Esophagus squamous epithelium (tissue), 5 donors: ENCODE measurements at regions of chr1 and their contacts with region 1.

Region 1: GRCh38 chr1:111709986-111710385 is 29.2 kb downstream of the INKA2 start:
- DNase-seq: no peak
- H3K4me3 ChIP-seq: no peak overlapping the region
- H3K27ac ChIP-seq: no peak overlapping the region
- H3K4me1 ChIP-seq: peaks cover 0 to 10% (median 0%) of the 10 kb centered on the region in 3 donors
- H3K27me3 ChIP-seq: no peaks in the 10 kb centered on the region
- CTCF ChIP-seq: no peak
- POLR2A ChIP-seq: no peak

Region 2: DNA sequence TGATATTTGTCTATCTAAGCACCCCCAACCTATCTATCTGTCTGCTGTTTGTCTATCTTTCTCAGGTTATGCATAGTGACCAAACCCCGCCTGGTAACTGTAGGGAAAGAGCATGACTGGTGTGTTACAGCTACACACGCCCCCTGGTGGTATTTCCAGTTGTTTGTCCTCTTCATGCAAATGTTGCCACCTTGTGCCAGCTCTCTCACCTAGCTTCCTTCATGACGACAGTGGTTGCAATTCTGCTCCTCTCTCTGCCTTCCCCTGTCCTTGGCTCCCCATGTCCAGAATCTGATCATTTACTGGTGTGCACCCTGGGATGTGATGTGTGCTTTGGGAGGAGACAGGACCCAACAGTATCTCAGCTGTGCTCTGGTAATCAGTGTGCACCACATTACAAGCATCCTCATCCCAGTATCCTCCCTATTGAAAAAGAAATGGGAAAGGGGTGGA is 37.3 kb after region 1 on chr1:
- intact Hi-C with region 1: loop called (anchors 5 kb)
- DNase-seq: no peak
- H3K4me3 ChIP-seq: no peak overlapping the region
- H3K27ac ChIP-seq: no peak overlapping the region
- H3K4me1 ChIP-seq: peaks cover 0 to 14% (median 0%) of the 10 kb centered on the region in 3 donors
- H3K27me3 ChIP-seq: no peaks in the 10 kb centered on the region
- CTCF ChIP-seq: peak; percentile 43 to 86 (median 63)
- POLR2A ChIP-seq: no peak